Activated CD4-positive, alpha-beta T cell treated with anti-CD3 and anti-CD28 coated beads for 36 hours (primary cell): ENCODE measurements at regions of chr7 and their contacts with region 1.

Region 1: DNA sequence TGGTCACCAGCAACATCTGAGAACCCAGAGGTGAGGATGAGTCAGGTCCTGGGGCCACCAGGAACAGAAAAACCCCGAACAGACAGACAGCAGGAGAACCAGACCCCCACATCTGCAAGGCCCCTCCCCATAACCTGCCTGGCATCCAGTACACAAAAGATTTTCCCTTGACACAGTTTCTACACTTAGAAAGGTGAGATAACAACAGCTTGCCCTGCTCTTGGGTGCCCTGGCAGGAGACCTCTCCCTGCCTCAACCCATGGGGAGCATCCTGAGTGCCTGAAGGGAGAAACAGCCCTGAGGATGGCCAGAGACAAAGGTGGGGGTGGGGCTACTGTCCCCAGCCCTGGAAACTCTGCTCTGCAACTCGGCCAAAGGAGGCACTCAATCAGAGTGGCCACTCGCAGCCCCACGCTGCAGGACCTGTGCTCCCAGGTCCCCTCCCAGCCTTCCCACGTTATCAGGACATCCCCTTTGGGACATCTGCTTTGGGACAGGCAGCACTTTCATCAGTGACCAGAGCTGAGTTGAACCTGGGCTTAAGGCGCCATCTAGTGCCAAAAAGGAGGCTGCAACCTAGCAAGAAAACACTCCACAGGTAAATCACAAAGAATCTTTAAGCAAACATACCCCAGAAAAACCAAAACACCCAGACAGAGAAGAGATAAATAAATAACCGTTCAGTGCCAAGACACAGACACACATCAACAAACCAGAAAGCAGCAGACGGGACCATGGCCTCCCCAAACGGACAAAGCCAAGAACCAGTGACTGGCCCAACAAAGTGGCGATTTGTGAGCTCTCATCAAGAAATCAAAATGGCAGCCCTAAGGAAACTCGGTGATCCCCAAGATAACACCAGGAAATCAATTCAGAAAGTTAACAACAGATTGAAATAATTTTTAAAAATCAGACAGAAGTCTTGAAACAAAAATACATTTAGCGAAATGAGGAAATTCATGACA is 233.7 kb downstream of the PTPRN2 start:
- DNase-seq: peak; percentile 39
- ATAC-seq: no peak
- H3K4me3 Mint-ChIP-seq: no peak overlapping the region
- H3K27ac Mint-ChIP-seq: no peak overlapping the region
- H3K4me1 Mint-ChIP-seq: no peaks in the 10 kb centered on the region
- H3K27me3 Mint-ChIP-seq: peaks cover 4% of the 10 kb centered on the region

Region 2: DNA sequence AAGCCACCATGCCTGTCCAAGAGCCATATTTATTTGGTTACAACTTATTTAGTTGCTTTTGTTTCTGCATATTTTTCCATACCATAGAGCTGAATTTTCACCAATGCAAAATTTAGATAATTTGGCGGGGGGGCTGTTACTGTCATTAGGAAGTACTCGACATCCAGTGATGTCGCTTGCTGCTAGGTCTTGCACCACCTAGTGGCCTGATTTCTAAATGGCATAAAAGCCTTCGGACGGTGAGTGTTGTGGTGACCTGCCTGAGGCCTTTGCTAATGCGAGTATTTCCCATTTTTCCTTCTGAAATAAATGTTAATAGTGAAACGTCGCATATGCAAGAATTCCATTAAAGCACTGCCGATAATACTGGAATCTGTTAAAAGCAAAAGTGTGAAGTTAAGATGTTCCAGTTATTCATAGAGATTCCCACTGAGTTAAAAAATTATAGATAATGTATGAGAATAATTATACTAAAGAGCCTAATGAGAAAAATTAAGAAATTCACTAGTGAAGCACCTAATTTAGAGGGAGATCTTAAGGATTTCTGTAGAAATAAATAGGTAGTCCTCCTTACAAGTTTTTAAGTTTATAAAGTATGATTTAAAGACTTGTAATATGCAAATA is 1103.2 kb before region 1 on chr7:
- CTCF ChIA-PET with region 1: no interaction called
- POLR2A ChIA-PET with region 1: no interaction called
- intact Hi-C with region 1: loop called in 1 of 2 experiments (anchors 10 kb)
- DNase-seq: peak; percentile 62
- ATAC-seq: peak; percentile 83
- H3K4me3 Mint-ChIP-seq: no peak overlapping the region
- H3K27ac Mint-ChIP-seq: no peak overlapping the region
- H3K4me1 Mint-ChIP-seq: no peaks in the 10 kb centered on the region
- H3K27me3 Mint-ChIP-seq: no peaks in the 10 kb centered on the region

Region 3: DNA sequence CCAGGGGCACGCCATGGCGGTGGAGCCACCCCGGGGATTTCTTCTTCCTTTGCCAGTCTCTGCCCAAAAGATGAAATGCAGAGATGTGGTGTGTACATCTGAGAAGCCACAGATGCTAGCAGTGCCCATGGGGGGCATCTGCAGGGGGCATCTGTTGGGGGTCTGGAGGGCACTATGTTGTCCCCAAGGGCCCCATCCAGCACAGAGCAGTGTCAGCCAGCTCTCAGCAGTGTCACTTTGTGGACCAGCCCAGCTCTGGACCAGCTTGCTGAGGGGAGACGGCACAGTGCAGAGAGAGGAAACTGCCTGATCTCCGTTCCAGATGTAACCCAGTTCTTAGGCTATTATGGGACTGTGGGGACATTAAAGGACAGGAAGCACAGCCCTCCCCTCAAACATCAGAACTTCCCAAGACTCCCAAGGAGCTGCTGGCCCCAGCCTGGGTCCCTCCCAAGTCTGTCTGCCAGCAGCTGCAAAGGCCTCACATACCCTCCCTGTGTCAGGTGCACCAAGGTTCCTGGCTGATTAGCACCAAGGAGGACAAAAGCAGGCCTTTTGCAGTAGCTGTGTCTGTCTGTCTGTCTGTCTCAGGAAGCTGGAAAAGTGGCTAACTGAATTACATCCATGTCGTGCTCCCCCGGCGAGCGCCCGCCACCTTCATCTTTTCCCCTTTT is 302.8 kb before region 1 on chr7:
- CTCF ChIA-PET with region 1: no interaction called
- POLR2A ChIA-PET with region 1: no interaction called
- intact Hi-C with region 1: loop called in 1 of 2 experiments (anchors 10 kb)
- DNase-seq: no peak
- ATAC-seq: no peak
- H3K4me3 Mint-ChIP-seq: no peak overlapping the region
- H3K27ac Mint-ChIP-seq: no peak overlapping the region
- H3K4me1 Mint-ChIP-seq: no peaks in the 10 kb centered on the region
- H3K27me3 Mint-ChIP-seq: peaks cover 2% of the 10 kb centered on the region

Region 4: GRCh38 chr7:158572003-158572828 is 218.3 kb after region 1 on chr7:
- CTCF ChIA-PET with region 1: no interaction called
- POLR2A ChIA-PET with region 1: no interaction called
- intact Hi-C with region 1: no loop called
- DNase-seq: no peak
- ATAC-seq: peak; percentile 19
- H3K4me3 Mint-ChIP-seq: no peak overlapping the region
- H3K27ac Mint-ChIP-seq: no peak overlapping the region
- H3K4me1 Mint-ChIP-seq: no peaks in the 10 kb centered on the region
- H3K27me3 Mint-ChIP-seq: peaks cover 20% of the 10 kb centered on the region